Esophagus muscularis mucosa (tissue), 4 donors: ENCODE measurements at regions of chr14 and their contacts with region 1.

Region 1: DNA sequence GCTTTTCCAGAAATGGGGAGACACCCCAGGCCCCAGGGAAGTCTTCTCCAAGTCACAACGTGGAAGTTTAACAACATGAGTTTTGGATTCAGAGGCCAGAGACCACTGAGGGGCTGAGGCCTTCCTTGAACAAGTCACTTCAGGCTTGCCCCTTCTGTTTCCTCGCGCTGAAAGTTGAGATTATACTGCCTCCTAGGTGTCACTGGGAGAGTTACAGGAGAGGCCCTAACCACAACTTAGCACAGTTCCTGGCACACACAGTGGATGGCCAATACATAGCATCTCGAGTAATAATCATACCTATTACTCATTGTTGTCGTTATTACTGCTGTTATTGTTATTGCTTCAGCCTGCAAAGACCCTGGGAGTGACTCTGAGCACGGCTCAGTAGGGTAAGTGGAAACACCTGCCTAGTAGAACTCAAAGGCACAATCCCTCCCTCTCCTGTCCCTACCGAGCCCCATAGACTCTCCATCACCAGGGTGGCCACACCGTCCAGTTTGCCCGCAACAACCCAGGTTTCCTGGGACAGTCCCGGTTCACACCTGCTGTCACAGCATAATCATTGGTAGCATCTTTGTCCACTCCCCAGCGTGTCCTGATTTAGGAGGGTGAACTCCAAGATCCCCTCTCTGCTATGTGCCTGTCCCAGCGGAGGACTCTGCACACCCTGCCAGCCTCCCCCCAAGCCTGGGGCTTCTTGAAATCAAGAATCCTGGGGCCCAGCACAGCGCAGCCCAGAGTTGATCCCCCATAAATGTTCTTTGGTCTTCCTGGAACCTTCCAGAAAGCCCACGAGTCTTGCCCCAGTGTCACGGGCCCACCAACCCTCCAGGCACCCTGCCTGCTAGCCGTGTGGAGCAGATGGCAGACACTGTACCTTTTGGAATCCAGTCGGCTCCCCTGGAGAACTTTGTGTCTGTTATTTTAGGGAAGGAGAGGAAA is 85.0 kb downstream of the SYNE3 start:
- DNase-seq: no peak
- H3K4me3 ChIP-seq: no peak overlapping the region
- H3K27ac ChIP-seq: peak overlapping the region in 2 of 4 donors; percentile 22 to 34
- H3K4me1 ChIP-seq: peaks cover 4 to 9% (median 8%) of the 10 kb centered on the region in 4 donors
- H3K27me3 ChIP-seq: peaks cover 0 to 3% (median 0%) of the 10 kb centered on the region in 4 donors
- CTCF ChIP-seq: peak in 2 of 3 experiments; percentile 33 to 55
- EP300 ChIP-seq: no peak
- POLR2A ChIP-seq: no peak

Region 2: GRCh38 chr14:94689218-94689984 is 742.1 kb before region 1 on chr14:
- intact Hi-C with region 1: loop called (anchors 5 kb)
- DNase-seq: no peak
- H3K4me3 ChIP-seq: peak overlapping the region in 3 of 4 donors; percentile 18 to 32 (median 27)
- H3K27ac ChIP-seq: no peak overlapping the region
- H3K4me1 ChIP-seq: peaks cover 0 to 9% (median 7%) of the 10 kb centered on the region in 4 donors
- H3K27me3 ChIP-seq: peaks cover 0 to 21% (median 0%) of the 10 kb centered on the region in 4 donors
- CTCF ChIP-seq: peak in 2 of 3 experiments; percentile 88 to 97
- EP300 ChIP-seq: no peak
- POLR2A ChIP-seq: no peak

Region 3: GRCh38 chr14:95282354-95283083 is 149.0 kb before region 1 on chr14:
- intact Hi-C with region 1: no loop called
- DNase-seq: no peak
- H3K4me3 ChIP-seq: no peak overlapping the region
- H3K27ac ChIP-seq: peak overlapping the region in 1 of 4 donors; percentile 10
- H3K4me1 ChIP-seq: peaks cover 0 to 7% (median 6%) of the 10 kb centered on the region in 4 donors
- H3K27me3 ChIP-seq: peaks cover 0 to 5% (median 0%) of the 10 kb centered on the region in 4 donors
- CTCF ChIP-seq: no peak
- EP300 ChIP-seq: no peak
- POLR2A ChIP-seq: no peak

Region 4: DNA sequence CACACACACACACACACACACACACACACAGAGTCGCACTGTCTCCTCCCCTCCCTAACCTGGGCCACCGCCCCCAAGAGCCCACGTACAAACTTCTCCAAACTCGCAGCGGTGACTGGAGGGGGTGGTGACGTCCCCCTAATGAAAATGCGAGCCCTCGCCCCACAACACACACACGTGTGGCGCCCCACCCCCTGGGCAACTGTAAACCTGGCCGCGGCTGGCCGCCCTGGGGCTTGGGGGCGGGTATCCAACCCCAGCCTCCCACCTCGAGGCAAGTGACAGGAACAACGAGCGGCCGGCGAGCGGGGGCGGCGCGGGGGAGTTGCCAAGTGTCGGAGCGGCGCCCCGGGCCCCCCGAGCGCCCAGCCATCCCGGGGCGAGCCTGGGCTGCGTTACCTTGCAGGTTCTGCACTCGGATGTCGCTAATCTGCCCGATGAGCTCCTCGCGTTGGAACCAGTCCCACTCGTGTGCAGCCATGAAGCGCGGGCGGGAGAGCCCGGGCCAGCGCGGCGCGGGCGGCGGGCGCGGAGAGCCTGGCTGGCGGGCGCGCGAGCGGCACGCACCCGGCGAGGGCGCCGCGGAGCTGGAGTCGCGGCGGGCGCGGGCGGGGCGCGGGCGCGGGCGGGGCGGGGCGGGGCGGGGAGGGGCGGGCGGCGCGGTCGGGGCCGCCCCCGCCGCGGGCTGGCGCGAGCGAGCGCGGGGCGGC is 112.0 kb before region 1 on chr14 and contains the start of gene CLMN:
- intact Hi-C with region 1: no loop called
- DNase-seq: no peak
- H3K4me3 ChIP-seq: peak within 1 kb of the TSS; percentile 73 to 91 (median 78)
- H3K27ac ChIP-seq: peak within 1 kb of the TSS; percentile 70 to 78 (median 76)
- H3K4me1 ChIP-seq: peaks cover 16 to 34% (median 28%) of the 10 kb centered on the region in 4 donors
- H3K27me3 ChIP-seq: no peaks in the 10 kb centered on the region
- CTCF ChIP-seq: no peak
- EP300 ChIP-seq: no peak
- POLR2A ChIP-seq: no peak
- total RNA-seq, gene CLMN: 6.5 to 10.0 (median 7.9) TPM